Motor neuron (in vitro differentiated cells): ENCODE measurements at regions of chr7 and their contacts with region 1.

Region 1: GRCh38 chr7:86904949-86905834 is 154.3 kb downstream of the ELAPOR2 start:
- ATAC-seq: peak in 3 of 8 experiments; percentile 42 to 56 (median 50)
- H3K4me3 ChIP-seq: no peak overlapping the region
- H3K27ac ChIP-seq: no peak overlapping the region
- H3K4me1 ChIP-seq: no peaks in the 10 kb centered on the region

Region 2: DNA sequence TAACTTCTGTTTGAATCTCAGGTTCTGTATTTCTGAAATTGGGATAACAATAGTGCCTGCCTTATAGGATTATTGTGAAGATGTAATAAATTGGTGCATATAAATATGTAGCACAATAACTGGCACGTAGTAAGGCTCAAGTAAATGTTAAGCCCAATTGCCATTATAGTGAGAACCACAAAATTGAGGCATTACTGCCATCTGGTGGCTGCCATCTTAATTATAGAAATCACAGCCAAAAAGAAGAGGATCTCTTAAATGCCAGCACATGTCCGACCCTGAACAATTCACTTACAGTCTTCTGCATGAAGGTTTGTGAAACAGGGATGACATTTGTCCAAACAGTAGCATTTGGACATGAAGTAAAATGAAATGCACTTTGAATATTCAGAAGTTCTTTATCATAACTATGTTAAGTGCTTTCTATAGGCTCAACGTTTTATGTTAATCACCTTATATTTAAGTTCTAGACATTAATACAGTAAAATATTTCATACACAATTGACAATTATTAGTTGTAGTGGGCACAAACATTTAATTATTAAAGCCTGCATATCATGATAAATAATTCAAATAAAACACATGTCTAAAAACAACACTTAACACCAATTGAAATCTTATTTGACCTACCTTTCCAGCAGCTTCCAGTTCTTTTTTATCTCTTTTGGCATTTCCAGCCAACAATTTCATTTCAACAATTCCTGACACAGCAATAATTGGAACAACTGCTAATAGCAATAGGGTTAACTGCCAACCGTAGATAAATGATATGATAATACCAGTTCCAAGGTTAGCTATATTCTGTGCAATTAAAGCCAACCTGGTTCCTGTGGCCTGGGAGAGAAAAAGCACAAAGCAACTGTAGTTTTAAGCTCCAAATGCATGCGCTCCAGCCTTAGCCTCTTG is 511.7 kb after region 1 on chr7:
- in situ Hi-C with region 1: loop called in 2 of 9 experiments (anchors 25 kb)
- ATAC-seq: peak in 7 of 8 experiments; percentile 35 to 74 (median 55)
- H3K4me3 ChIP-seq: no peak overlapping the region
- H3K27ac ChIP-seq: no peak overlapping the region
- H3K4me1 ChIP-seq: no peaks in the 10 kb centered on the region